Caco-2 (cell line): ENCODE measurements at regions of chrX and their contacts with region 1.

Region 1: DNA sequence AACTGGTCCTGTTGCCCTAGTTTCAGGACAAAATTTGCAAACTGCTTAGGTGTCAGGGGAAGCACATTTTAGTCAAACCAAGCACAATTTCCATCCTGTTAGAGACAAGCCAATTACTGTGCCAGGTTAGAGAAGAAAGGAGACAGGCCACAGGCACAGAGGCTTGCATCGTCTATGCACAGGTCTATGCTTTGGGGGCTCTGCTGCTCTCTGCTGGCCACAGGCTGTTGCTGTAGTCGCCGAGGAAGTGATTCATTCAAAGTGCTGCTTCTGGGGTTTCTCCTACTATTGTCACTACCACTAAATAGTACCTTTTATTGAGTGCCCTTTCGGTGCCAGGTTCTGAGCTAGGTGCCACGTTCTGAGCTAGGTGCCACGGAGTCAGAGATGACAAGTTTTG is 45.5 kb downstream of the VGLL1 start:
- DNase-seq: peak; percentile 44 to 46
- H3K4me3 ChIP-seq: no peak overlapping the region
- H3K4me3 Mint-ChIP-seq: no peak overlapping the region
- H3K27ac Mint-ChIP-seq: no peak overlapping the region
- H3K4me1 ChIP-seq: no peaks in the 10 kb centered on the region
- H3K4me1 Mint-ChIP-seq: peaks cover 5% of the 10 kb centered on the region
- H3K27me3 ChIP-seq: no peaks in the 10 kb centered on the region
- H3K27me3 Mint-ChIP-seq: peaks cover 7% of the 10 kb centered on the region
- CTCF ChIP-seq: peak; percentile 41 to 69

Region 2: GRCh38 chrX:136397001-136397400 is 180.6 kb before region 1 on chrX:
- CTCF ChIA-PET with region 1: no interaction called
- POLR2A ChIA-PET with region 1: no interaction called
- intact Hi-C with region 1: loop called (anchors 10 kb)
- DNase-seq: peak in 1 of 2 experiments; percentile 0
- H3K4me3 ChIP-seq: no peak overlapping the region
- H3K4me3 Mint-ChIP-seq: no peak overlapping the region
- H3K27ac Mint-ChIP-seq: no peak overlapping the region
- H3K4me1 ChIP-seq: no peaks in the 10 kb centered on the region
- H3K4me1 Mint-ChIP-seq: no peaks in the 10 kb centered on the region
- H3K27me3 ChIP-seq: no peaks in the 10 kb centered on the region
- H3K27me3 Mint-ChIP-seq: peaks cover 3% of the 10 kb centered on the region
- CTCF ChIP-seq: no peak

Region 3: GRCh38 chrX:136519070-136519469 is 58.5 kb before region 1 on chrX:
- CTCF ChIA-PET with region 1: no interaction called
- POLR2A ChIA-PET with region 1: no interaction called
- intact Hi-C with region 1: loop called (anchors 1 kb)
- DNase-seq: no peak
- H3K4me3 ChIP-seq: no peak overlapping the region
- H3K4me3 Mint-ChIP-seq: no peak overlapping the region
- H3K27ac Mint-ChIP-seq: no peak overlapping the region
- H3K4me1 ChIP-seq: no peaks in the 10 kb centered on the region
- H3K4me1 Mint-ChIP-seq: no peaks in the 10 kb centered on the region
- H3K27me3 ChIP-seq: no peaks in the 10 kb centered on the region
- H3K27me3 Mint-ChIP-seq: peaks cover 4% of the 10 kb centered on the region
- CTCF ChIP-seq: peak in 1 of 2 experiments; percentile 16

Region 4: GRCh38 chrX:136694431-136695087 is 117.0 kb after region 1 on chrX:
- CTCF ChIA-PET with region 1: interaction called, 4 read pairs
- POLR2A ChIA-PET with region 1: no interaction called
- intact Hi-C with region 1: loop called (anchors 10 kb)
- DNase-seq: peak in 1 of 2 experiments; percentile 10
- H3K4me3 ChIP-seq: no peak overlapping the region
- H3K4me3 Mint-ChIP-seq: no peak overlapping the region
- H3K27ac Mint-ChIP-seq: no peak overlapping the region
- H3K4me1 ChIP-seq: no peaks in the 10 kb centered on the region
- H3K4me1 Mint-ChIP-seq: no peaks in the 10 kb centered on the region
- H3K27me3 ChIP-seq: no peaks in the 10 kb centered on the region
- H3K27me3 Mint-ChIP-seq: peaks cover 11% of the 10 kb centered on the region
- CTCF ChIP-seq: peak; percentile 47 to 60